ENCODE measurements at regions of chr11 and their contacts with region 1.

Region 1: GRCh38 chr11:93652161-93652597 is 9.3 kb upstream of the CEP295 start:
- DNase-seq: no peak
- H3K4me3 Mint-ChIP-seq: no peak overlapping the region
- H3K27ac Mint-ChIP-seq: no peak overlapping the region
- H3K4me1 Mint-ChIP-seq: peaks cover 12% of the 10 kb centered on the region
- H3K27me3 Mint-ChIP-seq: peaks cover 4% of the 10 kb centered on the region

Region 2: GRCh38 chr11:92941676-92942571 is 710.3 kb before region 1 on chr11:
- CTCF ChIA-PET with region 1: no interaction called
- POLR2A ChIA-PET with region 1: no interaction called
- intact Hi-C with region 1: loop called (anchors 5 kb)
- DNase-seq: peak; percentile 18
- H3K4me3 Mint-ChIP-seq: no peak overlapping the region
- H3K27ac Mint-ChIP-seq: no peak overlapping the region
- H3K4me1 Mint-ChIP-seq: no peaks in the 10 kb centered on the region
- H3K27me3 Mint-ChIP-seq: peaks cover 9% of the 10 kb centered on the region

Region 3: GRCh38 chr11:92969634-92970347 is 682.4 kb before region 1 on chr11 and contains the start of gene MTNR1B:
- CTCF ChIA-PET with region 1: no interaction called
- POLR2A ChIA-PET with region 1: no interaction called
- intact Hi-C with region 1: no loop called
- DNase-seq: no peak
- H3K4me3 Mint-ChIP-seq: no peak within 1 kb of the TSS
- H3K27ac Mint-ChIP-seq: no peak within 1 kb of the TSS
- H3K4me1 Mint-ChIP-seq: peaks cover 5% of the 10 kb centered on the region
- H3K27me3 Mint-ChIP-seq: peaks cover 7% of the 10 kb centered on the region
- total RNA-seq, gene MTNR1B: not detected

Region 4: DNA sequence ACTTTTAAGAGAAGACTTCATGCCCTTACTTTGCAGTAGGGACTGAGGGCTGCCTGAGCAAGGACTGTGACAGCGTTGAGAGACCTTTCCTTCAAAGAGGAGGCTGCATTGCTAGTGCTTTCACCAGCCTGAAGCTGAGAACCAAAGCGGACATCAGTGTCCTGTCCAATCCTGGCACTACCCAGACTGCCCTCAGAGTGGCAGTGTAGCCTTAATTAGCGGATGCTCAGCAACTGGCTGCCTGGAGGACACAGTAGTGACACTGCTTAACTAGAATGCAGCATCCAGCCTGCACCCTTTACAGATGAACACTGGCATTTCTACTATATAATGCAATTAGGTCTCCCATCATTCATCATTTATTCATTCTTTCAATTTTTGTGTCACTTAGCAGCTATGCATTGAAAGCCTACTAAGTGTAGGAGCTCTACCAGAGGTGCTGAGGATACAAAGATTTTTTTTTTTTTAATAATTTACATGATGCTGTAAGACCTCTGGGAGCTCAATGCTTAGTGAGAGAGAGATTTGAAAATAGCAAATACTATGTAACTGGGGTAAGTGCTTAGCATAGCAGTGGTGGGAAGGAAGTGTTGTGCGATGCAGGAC is 417.5 kb before region 1 on chr11:
- CTCF ChIA-PET with region 1: interaction called, 98 read pairs
- POLR2A ChIA-PET with region 1: no interaction called
- intact Hi-C with region 1: loop called (anchors 1 kb)
- DNase-seq: peak; percentile 81
- H3K4me3 Mint-ChIP-seq: no peak overlapping the region
- H3K27ac Mint-ChIP-seq: no peak overlapping the region
- H3K4me1 Mint-ChIP-seq: no peaks in the 10 kb centered on the region
- H3K27me3 Mint-ChIP-seq: peaks cover 18% of the 10 kb centered on the region

Region 5: DNA sequence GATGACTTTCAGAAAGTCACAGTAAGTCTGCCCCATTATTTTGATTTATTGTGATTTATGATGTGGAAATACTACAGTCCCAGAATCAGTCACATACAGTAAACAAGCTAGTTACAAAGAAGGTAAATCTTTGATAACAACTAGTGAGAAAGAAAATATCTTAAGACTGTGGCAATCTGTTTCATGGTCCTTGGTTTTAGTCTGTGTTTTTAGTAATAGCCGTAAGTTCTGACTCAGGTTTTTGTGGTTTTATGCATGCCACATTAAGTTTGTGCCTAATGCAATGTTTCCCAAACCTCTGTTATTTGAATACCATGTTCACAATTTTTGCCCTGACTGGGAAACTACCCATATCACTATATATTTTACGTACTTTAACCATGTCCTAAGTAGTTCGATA is 16.0 kb after region 1 on chr11:
- CTCF ChIA-PET with region 1: interaction called, 11 read pairs
- POLR2A ChIA-PET with region 1: no interaction called
- intact Hi-C with region 1: no loop called
- DNase-seq: no peak
- H3K4me3 Mint-ChIP-seq: no peak overlapping the region
- H3K27ac Mint-ChIP-seq: peak overlapping the region; percentile 31
- H3K4me1 Mint-ChIP-seq: peaks cover 31% of the 10 kb centered on the region
- H3K27me3 Mint-ChIP-seq: no peaks in the 10 kb centered on the region